AG04450 (cell line): ENCODE measurements at regions of chr14 and their contacts with region 1.

Region 1: DNA sequence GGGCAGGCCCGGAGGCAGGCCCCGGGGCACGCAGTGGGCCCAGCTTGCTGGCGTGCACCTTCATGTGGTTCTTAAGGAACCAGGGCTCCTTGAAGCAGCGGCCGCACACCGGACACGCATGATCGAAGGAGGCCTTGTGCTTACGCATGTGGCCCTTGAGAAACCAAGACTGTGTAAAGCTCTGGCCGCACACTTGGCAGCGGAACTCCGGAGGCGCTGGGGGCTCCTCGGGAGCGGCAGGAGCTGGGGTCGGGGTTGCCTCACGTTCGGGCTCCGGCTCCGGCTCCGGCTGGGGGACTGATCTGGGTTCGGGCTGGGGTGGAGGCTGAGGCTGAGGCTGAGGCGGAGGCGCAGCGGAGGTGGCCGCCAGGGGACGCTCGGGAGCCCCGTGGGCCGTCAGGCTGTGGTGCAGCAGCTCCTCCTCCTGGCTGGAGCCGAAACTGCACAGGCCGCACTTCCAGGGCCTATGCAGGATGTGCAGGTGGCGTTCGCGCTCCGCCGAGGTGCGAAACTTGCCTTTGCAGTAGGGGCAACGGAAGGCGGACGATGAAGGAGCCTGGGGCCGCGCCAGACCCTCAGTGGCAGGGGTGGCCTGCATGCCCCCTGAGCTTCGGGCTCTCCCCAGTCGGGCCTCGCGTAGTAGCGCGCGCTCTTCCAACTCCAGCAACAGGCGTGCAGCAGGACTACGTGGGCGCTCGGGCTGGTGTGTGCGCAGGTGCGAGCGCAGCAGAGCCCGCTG is 6.0 kb downstream of the ZNF219 start:
- DNase-seq: no peak
- H3K4me3 ChIP-seq: no peak overlapping the region
- H3K27ac ChIP-seq: no peak overlapping the region
- H3K27me3 ChIP-seq: no peaks in the 10 kb centered on the region
- CTCF ChIP-seq: peak; percentile 100

Region 2: GRCh38 chr14:21003788-21004346 is 88.6 kb before region 1 on chr14:
- CTCF ChIA-PET with region 1: interaction called, 15 read pairs
- POLR2A ChIA-PET with region 1: no interaction called
- DNase-seq: no peak
- H3K4me3 ChIP-seq: no peak overlapping the region
- H3K27ac ChIP-seq: no peak overlapping the region
- H3K27me3 ChIP-seq: no peaks in the 10 kb centered on the region
- CTCF ChIP-seq: no peak

Region 3: DNA sequence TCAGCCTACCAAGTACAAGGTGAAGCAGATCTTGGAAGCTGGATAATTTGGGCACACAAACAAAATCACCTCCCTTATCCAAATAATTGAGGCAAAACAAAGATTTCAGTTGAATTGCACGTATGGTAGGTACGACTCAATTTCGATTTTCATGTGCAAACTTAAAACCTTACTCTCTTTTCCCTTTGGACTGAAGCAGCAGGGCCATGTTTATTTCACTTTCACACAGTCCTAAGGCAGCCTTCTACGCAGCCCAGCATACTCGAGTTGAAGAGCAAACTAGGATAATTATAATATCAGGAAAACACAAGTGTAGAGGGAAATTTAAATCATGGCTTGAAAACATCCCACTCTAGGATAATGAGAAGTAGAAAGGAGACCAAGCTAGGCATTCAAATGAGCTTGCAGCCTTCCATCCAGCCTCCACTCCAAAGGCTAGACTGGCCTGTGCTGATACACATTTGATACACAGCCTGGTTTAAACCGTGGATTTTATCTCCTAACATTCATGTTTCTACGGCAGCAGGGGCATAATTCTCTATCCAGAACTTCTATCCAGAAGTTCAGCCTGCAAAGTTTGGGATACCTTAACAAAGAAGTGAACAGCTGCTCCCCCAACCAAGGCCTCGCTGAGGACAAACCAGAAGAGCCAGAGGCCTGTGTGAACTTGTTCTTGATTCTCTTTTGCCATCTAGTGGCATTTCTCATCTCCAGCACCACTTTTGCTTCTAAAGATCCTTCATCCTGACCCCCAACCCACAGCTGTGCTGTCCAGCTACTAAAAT is 52.7 kb before region 1 on chr14:
- CTCF ChIA-PET with region 1: interaction called, 18 read pairs
- POLR2A ChIA-PET with region 1: interaction called, 5 read pairs
- DNase-seq: peak; percentile 26
- H3K4me3 ChIP-seq: no peak overlapping the region
- H3K27ac ChIP-seq: no peak overlapping the region
- H3K27me3 ChIP-seq: peaks cover 28% of the 10 kb centered on the region
- CTCF ChIP-seq: peak; percentile 71

Region 4: DNA sequence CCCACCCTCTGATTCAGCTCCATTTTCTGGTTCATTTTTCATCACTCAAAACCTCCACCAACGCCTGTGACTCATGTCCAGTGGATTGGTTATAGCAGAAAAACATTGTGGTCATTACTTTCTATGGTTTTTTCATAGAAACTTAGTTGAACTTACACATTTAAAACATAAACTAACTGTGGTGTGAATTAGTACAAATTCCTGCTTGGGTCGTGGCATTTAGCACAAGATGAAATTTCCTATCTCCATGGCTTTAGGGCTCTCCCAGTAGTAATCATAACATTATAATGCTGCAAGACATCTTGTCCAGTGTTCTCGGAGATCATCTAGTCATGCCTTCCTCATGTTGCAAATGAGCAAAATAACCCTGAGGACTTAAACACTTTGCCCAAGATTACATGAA is 43.2 kb before region 1 on chr14:
- CTCF ChIA-PET with region 1: interaction called, 16 read pairs
- POLR2A ChIA-PET with region 1: interaction called, 3 read pairs
- DNase-seq: no peak
- H3K4me3 ChIP-seq: no peak overlapping the region
- H3K27ac ChIP-seq: no peak overlapping the region
- H3K27me3 ChIP-seq: peaks cover 10% of the 10 kb centered on the region
- CTCF ChIP-seq: no peak

Region 5: GRCh38 chr14:21071225-21072030 is 21.0 kb before region 1 on chr14:
- CTCF ChIA-PET with region 1: interaction called, 128 read pairs
- POLR2A ChIA-PET with region 1: interaction called, 40 read pairs
- DNase-seq: peak; percentile 88
- H3K4me3 ChIP-seq: peak overlapping the region; percentile 82
- H3K27ac ChIP-seq: peak overlapping the region; percentile 95
- H3K27me3 ChIP-seq: no peaks in the 10 kb centered on the region
- CTCF ChIP-seq: no peak

Region 6: DNA sequence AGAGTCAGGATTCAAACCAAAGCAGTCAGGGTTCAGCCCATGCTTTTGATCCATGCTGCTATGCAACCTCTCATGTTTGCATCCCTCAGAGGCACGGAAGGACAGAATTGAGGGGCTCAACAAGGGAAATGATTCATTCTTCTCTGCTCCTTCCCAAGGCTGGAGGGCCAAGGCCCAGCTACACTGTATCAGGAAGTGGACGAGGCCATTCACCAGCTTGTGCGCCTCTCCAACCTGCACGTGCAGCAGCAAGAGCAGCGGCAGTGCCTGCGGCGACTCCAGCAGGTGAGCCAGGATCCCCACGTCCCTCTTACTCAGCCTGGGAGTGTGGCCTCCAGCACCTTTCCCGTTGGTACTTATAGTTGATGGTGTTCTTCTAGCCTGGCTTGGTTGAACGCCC is 13.7 kb before region 1 on chr14:
- CTCF ChIA-PET with region 1: interaction called, 128 read pairs
- POLR2A ChIA-PET with region 1: no interaction called
- DNase-seq: no peak
- H3K4me3 ChIP-seq: no peak overlapping the region
- H3K27ac ChIP-seq: no peak overlapping the region
- H3K27me3 ChIP-seq: no peaks in the 10 kb centered on the region
- CTCF ChIP-seq: no peak

Region 7: DNA sequence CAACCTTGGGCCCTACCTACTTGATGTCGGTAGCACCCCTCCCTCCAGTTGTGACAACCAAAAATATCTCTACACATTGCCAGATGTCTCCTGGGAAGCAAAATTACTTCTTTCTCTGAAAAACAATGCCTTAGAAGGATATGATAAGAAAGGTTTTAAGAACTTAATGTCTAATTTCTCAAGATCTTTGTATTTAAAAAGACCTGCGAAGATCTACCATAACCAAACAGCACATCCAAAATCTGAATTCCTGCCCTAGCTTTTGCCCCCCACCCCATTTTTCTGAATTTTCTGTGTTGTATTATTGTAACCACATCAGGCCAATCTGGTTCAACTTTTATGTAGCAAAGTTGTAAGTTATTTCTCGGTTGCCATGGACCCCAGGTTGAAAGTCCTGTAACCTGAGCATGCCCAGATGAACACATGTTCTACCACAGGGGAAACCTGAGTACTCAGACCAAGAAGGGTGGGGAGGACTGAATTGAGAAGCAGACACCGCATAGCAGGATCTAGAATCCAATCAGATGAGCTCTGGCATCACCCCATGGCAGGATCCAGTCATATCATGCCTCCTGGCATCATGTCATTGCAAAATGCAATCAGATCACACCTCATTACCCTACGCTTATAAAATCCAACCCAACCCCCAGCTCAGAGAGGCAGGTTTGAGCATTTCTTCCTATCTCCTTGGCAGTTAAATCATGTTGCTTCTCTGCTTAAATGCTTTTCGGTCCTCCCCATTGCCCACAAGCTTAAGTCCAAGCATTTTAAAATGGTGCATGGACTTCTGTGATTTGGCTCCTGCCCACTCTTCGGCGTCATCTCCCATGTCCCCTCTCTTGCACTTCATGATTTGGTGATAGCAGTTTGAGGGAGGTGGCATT is 17.2 kb after region 1 on chr14:
- CTCF ChIA-PET with region 1: interaction called, 151 read pairs
- POLR2A ChIA-PET with region 1: interaction called, 14 read pairs
- DNase-seq: no peak
- H3K4me3 ChIP-seq: no peak overlapping the region
- H3K27ac ChIP-seq: no peak overlapping the region
- H3K27me3 ChIP-seq: no peaks in the 10 kb centered on the region
- CTCF ChIP-seq: no peak

Region 8: DNA sequence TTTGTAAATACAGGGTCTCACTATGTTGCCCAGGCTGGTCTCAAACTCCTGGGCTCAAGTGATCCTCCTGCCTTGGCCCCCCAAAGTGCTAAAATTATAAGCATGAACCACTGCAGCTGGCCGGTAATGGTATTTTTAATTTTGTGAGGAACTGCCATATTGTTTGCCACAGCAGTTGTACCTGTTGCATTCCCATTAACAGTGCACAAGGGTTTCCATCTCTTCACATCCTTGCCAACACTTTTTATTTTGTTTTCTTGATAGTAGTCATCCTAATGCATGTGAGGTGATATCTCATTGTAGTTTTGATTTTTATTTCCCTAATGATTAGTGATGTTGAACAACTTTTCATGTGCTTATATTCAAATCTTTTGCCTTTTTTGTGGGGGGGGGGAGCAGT is 49.9 kb after region 1 on chr14:
- CTCF ChIA-PET with region 1: no interaction called
- POLR2A ChIA-PET with region 1: no interaction called
- DNase-seq: no peak
- H3K4me3 ChIP-seq: no peak overlapping the region
- H3K27ac ChIP-seq: no peak overlapping the region
- H3K27me3 ChIP-seq: no peaks in the 10 kb centered on the region
- CTCF ChIP-seq: no peak

Region 9: DNA sequence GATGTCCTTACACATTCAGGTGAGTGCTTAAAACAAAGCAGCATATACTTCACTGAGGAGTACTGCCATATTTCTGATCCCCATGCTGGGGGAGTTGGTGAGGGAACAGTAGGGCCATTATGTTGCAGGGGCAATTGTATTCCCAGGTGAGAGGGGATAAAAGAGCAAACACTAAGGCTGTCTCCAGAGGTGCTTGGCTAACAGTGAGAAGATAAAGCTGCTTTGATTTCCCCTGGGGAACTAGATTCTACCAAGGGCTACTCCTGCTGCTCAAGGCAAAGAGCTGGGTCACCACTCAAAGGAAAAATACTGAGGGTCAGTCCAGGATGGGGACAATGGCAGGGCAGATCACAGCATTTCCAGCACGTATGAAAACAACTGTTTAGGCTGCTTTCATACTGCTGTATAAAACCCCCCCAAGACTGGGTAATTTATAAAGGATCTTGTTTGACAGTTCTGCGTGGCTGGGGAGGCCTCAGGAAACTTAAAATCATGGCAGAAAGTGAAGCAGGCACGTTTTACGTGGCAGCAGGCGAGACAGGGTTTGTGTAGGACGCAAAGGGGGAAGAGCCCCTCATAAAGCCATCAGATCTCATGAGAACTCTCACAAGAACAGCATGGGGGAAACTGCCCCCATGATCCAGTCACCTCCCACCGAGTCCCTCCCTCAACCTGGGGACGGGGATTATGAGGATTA is 111.2 kb after region 1 on chr14:
- CTCF ChIA-PET with region 1: no interaction called
- POLR2A ChIA-PET with region 1: no interaction called
- DNase-seq: no peak
- H3K4me3 ChIP-seq: no peak overlapping the region
- H3K27ac ChIP-seq: no peak overlapping the region
- H3K27me3 ChIP-seq: no peaks in the 10 kb centered on the region
- CTCF ChIP-seq: no peak

Region 10: DNA sequence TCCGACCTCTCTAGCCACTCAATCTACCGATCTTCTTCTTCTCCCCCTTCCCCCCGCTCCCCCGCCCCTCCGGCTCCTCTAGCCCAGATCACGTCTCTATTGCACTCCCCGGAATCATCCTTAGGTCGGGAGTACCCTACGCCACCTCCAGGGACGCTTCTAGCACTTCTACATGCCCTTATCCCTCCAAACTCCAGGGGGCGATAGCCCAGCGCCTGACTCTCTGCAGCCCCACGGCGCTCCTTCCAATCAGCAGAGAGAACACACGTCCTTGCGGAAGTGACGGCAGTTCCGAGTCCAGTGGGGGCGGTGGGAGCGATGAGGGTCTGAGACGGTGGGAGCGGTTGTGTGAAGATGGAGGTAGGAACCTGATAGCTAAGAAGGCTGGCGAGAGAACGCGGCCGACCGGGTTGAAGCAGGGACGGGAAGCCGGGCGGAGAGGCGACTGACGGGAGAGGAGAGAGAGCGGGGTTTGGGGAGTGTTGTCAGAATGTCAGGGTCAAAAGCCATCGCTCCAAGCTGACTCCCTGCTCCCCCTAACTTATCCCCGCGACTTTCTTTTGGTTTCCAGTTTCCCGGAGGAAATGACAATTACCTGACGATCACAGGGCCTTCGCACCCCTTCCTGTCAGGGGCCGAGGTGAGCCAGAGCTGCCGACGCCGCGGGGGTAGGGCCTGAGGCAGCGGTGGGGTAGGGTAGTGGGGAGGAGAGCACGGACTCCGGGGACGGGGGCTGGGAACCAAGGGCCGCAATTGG is 384.7 kb after region 1 on chr14 and contains the starts of genes RAB2B and TOX4:
- CTCF ChIA-PET with region 1: no interaction called
- POLR2A ChIA-PET with region 1: no interaction called
- DNase-seq: peak; percentile 97
- H3K4me3 ChIP-seq: peak within 1 kb of the TSS; percentile 97
- H3K27ac ChIP-seq: peak within 1 kb of the TSS; percentile 71
- H3K27me3 ChIP-seq: no peaks in the 10 kb centered on the region
- CTCF ChIP-seq: peak; percentile 99
- polyA plus RNA-seq, gene RAB2B: 32.6 and 36.7 TPM in 2 replicates
- polyA plus RNA-seq, gene TOX4: 93.7 and 94.6 TPM in 2 replicates